ENCODE measurements at regions of chr1 and their contacts with region 1.

Region 1: DNA sequence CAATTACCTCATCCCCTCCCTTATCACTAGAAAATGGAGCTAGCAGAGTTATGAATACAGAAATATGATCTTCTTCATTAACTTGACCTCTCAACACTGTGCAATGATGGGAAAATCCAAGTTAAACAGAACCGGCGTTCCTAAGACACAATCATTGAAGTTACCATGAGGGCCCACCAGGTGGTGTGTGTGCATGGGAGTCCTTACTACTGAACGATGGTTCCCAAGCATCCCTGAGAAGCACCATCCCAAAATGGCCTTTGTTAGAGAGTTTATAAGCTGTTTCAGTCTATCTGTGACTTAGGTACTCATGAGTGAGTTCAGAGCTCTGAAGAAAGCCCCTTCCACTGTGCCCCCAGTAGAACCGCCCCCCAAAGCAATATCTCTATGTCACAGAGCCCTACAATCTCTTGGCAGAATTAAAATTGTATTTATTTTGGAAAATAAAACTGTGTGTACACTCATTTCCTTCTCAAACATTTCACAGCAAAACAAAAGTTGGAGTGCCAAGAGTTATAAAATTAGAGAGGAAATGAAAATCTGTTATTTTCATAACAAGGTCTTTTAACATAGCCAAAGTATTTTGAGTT is 56.8 kb downstream of the PLD5 start:
- DNase-seq: peak in 1 of 2 donors; percentile 15
- ATAC-seq: peak in 1 of 2 donors; percentile 33
- H3K4me3 ChIP-seq: no peak overlapping the region
- H3K27ac ChIP-seq: no peak overlapping the region
- H3K4me1 ChIP-seq: no peaks in the 10 kb centered on the region
- H3K27me3 ChIP-seq: no peaks in the 10 kb centered on the region
- CTCF ChIP-seq: peak in 4 of 5 experiments; percentile 9 to 39 (median 22)
- POLR2A ChIP-seq: no peak

Region 2: GRCh38 chr1:243312952-243313634 is 845.4 kb after region 1 on chr1:
- in situ Hi-C with region 1: loop called in 2 of 4 experiments (anchors 25 kb)
- intact Hi-C with region 1: no loop called
- DNase-seq: no peak
- ATAC-seq: no peak
- H3K4me3 ChIP-seq: no peak overlapping the region
- H3K27ac ChIP-seq: no peak overlapping the region
- H3K4me1 ChIP-seq: no peaks in the 10 kb centered on the region
- H3K27me3 ChIP-seq: no peaks in the 10 kb centered on the region
- CTCF ChIP-seq: no peak
- POLR2A ChIP-seq: no peak

Measured in gastrocnemius medialis (tissue), 4 donors.